ENCODE measurements at regions of chr5 and their contacts with region 1.

Region 1: GRCh38 chr5:40652441-40653220 is 27.1 kb upstream of the PTGER4 start:
- DNase-seq: peak; percentile 65
- ATAC-seq: peak; percentile 52
- H3K4me3 Mint-ChIP-seq: peak overlapping the region; percentile 76
- H3K27ac Mint-ChIP-seq: peak overlapping the region; percentile 96
- H3K4me1 Mint-ChIP-seq: peaks cover 78% of the 10 kb centered on the region
- H3K27me3 Mint-ChIP-seq: no peaks in the 10 kb centered on the region

Region 2: DNA sequence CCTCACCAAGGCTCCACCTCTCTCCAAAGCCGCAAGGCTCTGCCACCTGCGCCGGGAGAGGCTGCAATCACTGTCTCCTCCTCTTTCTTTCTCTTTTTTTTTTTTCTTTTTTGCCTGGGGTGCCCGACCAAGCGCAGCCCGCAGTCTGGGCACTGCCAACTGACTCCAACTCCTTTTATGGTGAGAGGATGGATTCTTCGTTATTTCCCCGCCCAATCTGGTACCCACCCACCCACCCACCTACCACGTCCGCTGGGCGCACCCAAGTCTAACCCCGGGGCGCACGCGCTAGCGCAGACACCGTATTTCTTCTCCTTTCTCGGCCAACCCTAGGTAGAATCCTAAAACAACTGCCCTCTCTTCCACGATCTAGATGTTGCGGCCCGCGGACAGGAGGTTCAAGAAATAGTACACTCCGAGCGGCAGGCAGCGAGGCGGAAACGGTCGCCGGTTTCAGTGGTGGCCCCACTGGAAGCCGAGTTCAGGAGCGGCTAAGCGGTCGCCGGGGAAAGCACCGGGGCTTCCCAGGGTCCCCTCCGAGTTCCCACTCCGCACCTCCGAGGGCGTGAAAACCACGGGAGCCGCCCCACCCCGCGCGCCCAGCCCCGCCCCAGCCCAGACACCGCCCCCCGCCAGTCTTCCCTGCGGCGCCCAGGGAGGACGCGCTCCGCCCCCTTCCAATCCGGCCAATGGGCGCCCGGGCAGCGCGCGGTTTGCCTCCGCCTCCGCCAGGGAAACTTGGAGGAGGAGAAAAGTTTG is 26.7 kb after region 1 on chr5:
- CTCF ChIA-PET with region 1: interaction called, 24 read pairs
- DNase-seq: peak; percentile 93
- ATAC-seq: peak; percentile 73
- H3K4me3 Mint-ChIP-seq: peak overlapping the region; percentile 86
- H3K27ac Mint-ChIP-seq: peak overlapping the region; percentile 97
- H3K4me1 Mint-ChIP-seq: peaks cover 40% of the 10 kb centered on the region
- H3K27me3 Mint-ChIP-seq: no peaks in the 10 kb centered on the region

Region 3: DNA sequence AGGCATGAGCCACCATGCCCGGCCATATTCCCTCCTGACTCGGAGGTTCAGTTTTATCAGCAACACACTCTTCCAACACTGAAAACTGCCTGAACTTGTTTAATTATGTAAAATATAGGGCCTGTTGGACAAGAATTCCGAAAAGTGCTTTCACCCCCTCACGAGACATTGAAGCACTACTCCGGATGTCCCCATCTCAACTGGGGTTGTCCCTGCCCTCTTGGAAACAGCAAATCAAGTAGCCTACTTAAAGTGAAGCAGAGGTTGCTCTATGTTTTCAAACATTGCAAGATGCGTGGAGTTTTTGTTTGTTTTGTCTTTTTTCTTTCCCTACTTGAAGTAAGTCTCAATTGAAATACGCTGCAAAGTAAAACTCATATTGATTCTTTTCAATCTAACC is 34.7 kb after region 1 on chr5:
- CTCF ChIA-PET with region 1: interaction called, 24 read pairs
- DNase-seq: no peak
- ATAC-seq: no peak
- H3K4me3 Mint-ChIP-seq: peak overlapping the region; percentile 86
- H3K27ac Mint-ChIP-seq: peak overlapping the region; percentile 86
- H3K4me1 Mint-ChIP-seq: peaks cover 74% of the 10 kb centered on the region
- H3K27me3 Mint-ChIP-seq: no peaks in the 10 kb centered on the region

Region 4: GRCh38 chr5:40937075-40937474 is 284.4 kb after region 1 on chr5:
- CTCF ChIA-PET with region 1: no interaction called
- DNase-seq: no peak
- ATAC-seq: no peak
- H3K4me3 Mint-ChIP-seq: no peak overlapping the region
- H3K27ac Mint-ChIP-seq: no peak overlapping the region
- H3K4me1 Mint-ChIP-seq: no peaks in the 10 kb centered on the region
- H3K27me3 Mint-ChIP-seq: peaks cover 4% of the 10 kb centered on the region

Measured in activated CD8-positive, alpha-beta memory T cell treated with anti-CD3 and anti-CD28 coated beads, Interleukin-2, amount 10 ng/mL, durations not matched to agents 7 days and 5 days (primary cell).